ENCODE measurements at regions of chr11 and their contacts with region 1.

Region 1: DNA sequence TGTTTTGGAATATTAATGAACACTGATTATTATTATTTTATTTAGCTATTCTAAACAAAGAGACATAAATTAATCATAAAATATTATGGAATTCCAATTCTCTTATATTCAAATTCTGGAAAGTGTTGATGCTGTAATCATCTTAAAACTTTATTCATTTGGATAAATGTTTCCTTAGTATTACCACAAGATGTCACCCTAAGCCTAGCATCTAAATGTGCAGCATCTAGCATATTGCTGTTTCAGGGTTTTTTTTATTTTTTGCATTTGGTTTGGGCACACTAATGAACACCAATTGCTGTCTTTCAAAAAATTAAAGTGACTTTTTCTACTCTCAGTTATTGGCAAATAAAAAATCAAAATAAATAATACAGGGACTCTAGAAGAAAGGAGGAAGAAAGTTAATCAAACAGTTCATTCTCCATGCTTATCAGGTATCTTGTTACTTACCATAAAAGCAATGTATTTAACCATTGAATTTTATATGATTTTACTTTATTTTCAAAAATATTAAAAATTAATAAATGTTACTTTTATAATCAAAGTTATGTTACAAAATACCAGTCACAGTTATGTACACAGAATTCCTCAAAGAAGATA is 31.8 kb downstream of the DLG2 start:
- DNase-seq: peak; percentile 30 to 62 (median 40)
- ATAC-seq: peak; percentile 86
- H3K4me3 ChIP-seq: no peak overlapping the region
- H3K27ac ChIP-seq: no peak overlapping the region
- H3K4me1 ChIP-seq: no peaks in the 10 kb centered on the region; a peak in 2 of 5 replicates
- H3K27me3 ChIP-seq: no peaks in the 10 kb centered on the region
- CTCF ChIP-seq: peak; percentile 39 to 83 (median 44); a peak in 4 of 6 replicates
- EP300 ChIP-seq: no peak
- POLR2A ChIP-seq: no peak
- RAD21 ChIP-seq: peak; percentile 91 to 95

Region 2: DNA sequence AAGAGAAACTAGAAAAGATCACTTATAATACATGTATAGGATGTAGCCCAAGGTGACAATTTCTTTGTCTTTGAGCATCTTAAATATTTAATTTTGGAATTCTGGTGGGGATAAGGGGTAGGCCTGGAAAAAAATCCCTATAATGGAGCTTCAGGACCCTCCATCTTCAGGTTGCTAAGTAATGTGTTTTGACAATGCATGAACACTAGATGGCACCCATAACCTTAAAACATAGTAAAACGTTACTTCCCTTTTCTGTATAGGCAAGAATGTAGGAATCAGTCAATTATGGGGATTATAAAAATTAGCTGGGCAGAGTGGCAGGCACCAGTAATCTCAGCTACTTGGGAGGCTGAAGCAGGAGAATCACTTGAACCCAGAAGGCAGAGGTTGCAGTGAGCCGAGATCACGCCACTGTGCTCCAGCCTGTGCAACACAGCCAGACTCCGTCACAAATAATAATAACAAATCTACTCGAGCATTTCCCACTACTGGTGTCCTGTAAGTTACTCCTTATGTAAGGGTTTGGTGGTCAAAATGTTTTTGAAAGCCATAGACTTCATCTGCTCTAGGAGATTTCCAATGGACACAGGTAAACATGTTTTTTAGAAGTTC is 1767.3 kb before region 1 on chr11:
- CTCF ChIA-PET with region 1: interaction called, 3 read pairs
- POLR2A ChIA-PET with region 1: no interaction called
- in situ Hi-C with region 1: no loop called
- intact Hi-C with region 1: loop called (anchors 5 kb)
- DNase-seq: peak; percentile 19 to 46 (median 25)
- ATAC-seq: peak; percentile 90
- H3K4me3 ChIP-seq: no peak overlapping the region
- H3K27ac ChIP-seq: no peak overlapping the region
- H3K4me1 ChIP-seq: no peaks in the 10 kb centered on the region
- H3K27me3 ChIP-seq: no peaks in the 10 kb centered on the region
- CTCF ChIP-seq: peak; percentile 24 to 64 (median 48); a peak in 5 of 6 replicates
- EP300 ChIP-seq: no peak
- POLR2A ChIP-seq: no peak
- RAD21 ChIP-seq: peak; percentile 28 to 61; a peak in 3 of 4 replicates

Region 3: GRCh38 chr11:85826116-85826855 is 230.9 kb after region 1 on chr11:
- CTCF ChIA-PET with region 1: no interaction called
- POLR2A ChIA-PET with region 1: no interaction called
- in situ Hi-C with region 1: no loop called
- intact Hi-C with region 1: loop called (anchors 10 kb)
- DNase-seq: peak in 2 of 4 experiments; percentile 26 to 35
- ATAC-seq: peak; percentile 90
- H3K4me3 ChIP-seq: no peak overlapping the region
- H3K27ac ChIP-seq: no peak overlapping the region
- H3K4me1 ChIP-seq: no peaks in the 10 kb centered on the region
- H3K27me3 ChIP-seq: peaks cover 14 to 21% of the 10 kb centered on the region in 2 experiments
- CTCF ChIP-seq: peak; percentile 31 to 48 (median 43); a peak in 4 of 6 replicates
- EP300 ChIP-seq: no peak
- POLR2A ChIP-seq: no peak
- RAD21 ChIP-seq: peak; percentile 23 to 53

Region 4: GRCh38 chr11:86218125-86219084 is 623.0 kb after region 1 on chr11:
- CTCF ChIA-PET with region 1: no interaction called
- POLR2A ChIA-PET with region 1: no interaction called
- in situ Hi-C with region 1: no loop called
- intact Hi-C with region 1: loop called (anchors 5 kb)
- DNase-seq: peak; percentile 76 to 90 (median 83)
- ATAC-seq: peak; percentile 95
- H3K4me3 ChIP-seq: no peak overlapping the region
- H3K27ac ChIP-seq: peak overlapping the region; percentile 56; the same call in 2 of the 3 replicates
- H3K4me1 ChIP-seq: peaks cover 3 to 14% of the 10 kb centered on the region in 2 experiments; a peak in 3 of 5 replicates
- H3K27me3 ChIP-seq: no peaks in the 10 kb centered on the region
- CTCF ChIP-seq: peak; percentile 84 to 92 (median 92)
- EP300 ChIP-seq: no peak
- POLR2A ChIP-seq: no peak
- RAD21 ChIP-seq: peak; percentile 91 to 92

Region 5: DNA sequence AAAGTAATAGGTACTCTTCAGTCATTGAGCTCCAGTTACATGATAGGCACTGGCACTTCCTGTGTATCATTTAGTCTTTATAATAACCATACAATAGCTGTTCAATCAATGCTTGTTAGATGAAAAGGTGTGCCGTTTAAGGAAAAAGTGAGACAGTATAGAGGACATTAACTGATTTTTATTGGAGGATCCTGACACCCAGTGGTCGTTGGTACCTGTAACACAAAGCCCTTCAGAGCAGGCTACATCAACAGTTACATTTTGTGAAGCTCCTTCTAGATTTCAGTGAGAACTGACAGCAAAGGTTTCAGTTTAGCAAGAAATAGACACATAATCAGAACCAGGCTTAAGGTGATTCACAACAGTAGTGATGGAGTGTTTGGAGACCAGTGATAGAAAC is 823.5 kb after region 1 on chr11:
- CTCF ChIA-PET with region 1: interaction called, 4 read pairs
- POLR2A ChIA-PET with region 1: no interaction called
- in situ Hi-C with region 1: no loop called
- intact Hi-C with region 1: loop called (anchors 5 kb)
- DNase-seq: peak in 1 of 4 experiments; percentile 38
- ATAC-seq: peak; percentile 84
- H3K4me3 ChIP-seq: no peak overlapping the region
- H3K27ac ChIP-seq: no peak overlapping the region
- H3K4me1 ChIP-seq: peaks cover 0 to 10% of the 10 kb centered on the region in 2 experiments; a peak in 3 of 5 replicates
- H3K27me3 ChIP-seq: peaks cover 0 to 8% of the 10 kb centered on the region in 2 experiments; a peak in 1 of 5 replicates
- CTCF ChIP-seq: peak in 2 of 3 experiments; percentile 53 to 61; a peak in 4 of 6 replicates
- EP300 ChIP-seq: no peak
- POLR2A ChIP-seq: no peak
- RAD21 ChIP-seq: peak; percentile 51 to 66

Measured in K562 (cell line).